ENCODE measurements at regions of chr11 and their contacts with region 1.

Region 1: DNA sequence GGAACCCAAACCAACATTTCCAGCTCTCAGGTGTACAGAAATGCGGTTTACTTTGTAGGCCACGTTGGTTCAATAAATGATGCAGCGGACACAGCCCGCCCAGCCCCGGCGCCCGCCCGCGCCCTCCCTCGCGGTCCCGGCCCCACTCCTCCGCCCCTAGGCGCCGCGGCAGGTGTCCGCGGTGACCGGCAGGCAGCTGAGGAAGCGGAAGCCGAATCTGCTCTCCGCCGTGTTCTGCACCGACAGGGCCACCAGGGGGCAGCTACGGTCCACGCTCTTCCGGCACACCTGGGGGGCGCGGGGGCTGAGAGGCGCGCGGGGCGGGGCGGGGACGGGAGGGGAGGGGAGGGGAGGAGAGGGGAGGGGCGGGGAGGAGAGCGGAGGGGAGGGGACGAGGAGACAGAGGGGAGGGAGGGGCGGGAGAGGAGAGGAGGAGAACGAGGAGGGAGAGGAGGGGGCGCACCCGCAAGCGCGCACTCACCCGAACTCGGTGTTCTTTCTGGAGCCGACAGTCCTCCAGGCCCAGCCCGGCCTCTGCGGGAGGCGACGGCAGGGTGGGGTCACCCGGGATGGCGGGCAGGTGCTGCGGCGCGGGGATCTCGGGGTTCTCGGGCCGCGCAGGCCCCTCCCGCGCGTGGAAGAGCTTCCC is 5.6 kb downstream of the LMNTD2 start:
- DNase-seq: peak; percentile 23 to 92 (median 66)
- ATAC-seq: peak; percentile 73 to 82 (median 78)
- H3K4me3 ChIP-seq: peak overlapping the region; percentile 40 to 52
- H3K4me3 Mint-ChIP-seq: peak overlapping the region; percentile 34 to 62 (median 55)
- H3K27ac ChIP-seq: no peak overlapping the region
- H3K27ac Mint-ChIP-seq: no peak overlapping the region
- H3K4me1 ChIP-seq: peaks cover 2 to 31% of the 10 kb centered on the region in 2 experiments
- H3K4me1 Mint-ChIP-seq: peaks cover 10 to 13% (median 11%) of the 10 kb centered on the region in 3 donors
- H3K27me3 ChIP-seq: peaks cover 0 to 22% of the 10 kb centered on the region in 2 experiments
- H3K27me3 Mint-ChIP-seq: no peaks in the 10 kb centered on the region

Region 2: GRCh38 chr11:225734-226453 is 329.1 kb before region 1 on chr11:
- CTCF ChIA-PET with region 1: no interaction called
- POLR2A ChIA-PET with region 1: no interaction called
- DNase-seq: no peak
- ATAC-seq: no peak
- H3K4me3 ChIP-seq: no peak overlapping the region
- H3K4me3 Mint-ChIP-seq: no peak overlapping the region
- H3K27ac ChIP-seq: no peak overlapping the region
- H3K27ac Mint-ChIP-seq: no peak overlapping the region
- H3K4me1 ChIP-seq: no peaks in the 10 kb centered on the region
- H3K4me1 Mint-ChIP-seq: peaks cover 8 to 10% (median 9%) of the 10 kb centered on the region in 3 donors
- H3K27me3 ChIP-seq: no peaks in the 10 kb centered on the region
- H3K27me3 Mint-ChIP-seq: no peaks in the 10 kb centered on the region

Region 3: GRCh38 chr11:257766-258493 is 297.0 kb before region 1 on chr11:
- CTCF ChIA-PET with region 1: no interaction called
- POLR2A ChIA-PET with region 1: no interaction called
- DNase-seq: no peak
- ATAC-seq: no peak
- H3K4me3 ChIP-seq: no peak overlapping the region
- H3K4me3 Mint-ChIP-seq: no peak overlapping the region
- H3K27ac ChIP-seq: no peak overlapping the region
- H3K27ac Mint-ChIP-seq: no peak overlapping the region
- H3K4me1 ChIP-seq: no peaks in the 10 kb centered on the region
- H3K4me1 Mint-ChIP-seq: peaks cover 0 to 11% (median 2%) of the 10 kb centered on the region in 3 donors
- H3K27me3 ChIP-seq: peaks cover 0 to 7% of the 10 kb centered on the region in 2 experiments
- H3K27me3 Mint-ChIP-seq: peaks cover 0 to 4% of the 10 kb centered on the region in 2 donors

Region 4: DNA sequence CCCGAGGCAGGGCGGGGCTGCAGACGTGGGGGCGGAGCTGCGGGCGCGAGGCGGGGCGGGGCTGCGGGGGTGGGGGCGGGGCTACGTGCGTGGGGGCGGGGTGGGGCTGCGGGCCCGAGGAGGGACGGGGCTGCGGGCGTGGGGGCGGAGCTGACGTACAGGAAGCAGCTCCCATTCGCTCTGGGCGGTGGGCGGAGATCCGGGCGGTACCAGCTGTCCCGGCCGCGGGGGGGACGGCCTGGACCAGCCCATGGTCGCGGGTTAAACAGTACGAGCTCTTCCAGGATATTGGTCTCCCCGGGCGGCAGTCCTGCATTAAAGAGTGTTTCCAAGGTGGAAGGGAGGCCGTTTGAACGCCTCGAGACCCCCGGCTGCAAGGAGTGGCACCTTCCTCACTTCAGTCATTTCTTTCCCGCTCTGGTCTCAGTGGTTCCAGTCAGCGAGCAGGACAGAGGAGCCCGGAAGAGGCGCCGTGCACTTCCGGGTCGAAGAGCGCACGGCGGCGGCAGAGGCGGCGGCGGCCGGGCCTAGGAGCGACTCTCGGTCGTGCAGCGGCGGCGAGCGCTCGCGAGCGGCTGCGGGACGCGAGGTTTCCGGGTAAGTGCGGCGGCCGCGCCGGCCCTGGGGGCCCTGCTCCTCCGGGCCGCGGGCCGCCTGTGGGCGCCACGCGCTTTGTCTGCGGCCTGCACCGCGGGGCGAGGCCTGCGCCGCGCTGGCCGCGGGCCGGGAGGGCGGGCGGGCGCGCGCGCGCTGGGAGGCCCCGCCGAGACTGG is 21.2 kb after region 1 on chr11 and contains the start of gene PHRF1:
- CTCF ChIA-PET with region 1: interaction called in 1 of 2 experiments, 12 read pairs
- POLR2A ChIA-PET with region 1: no interaction called
- DNase-seq: peak; percentile 89 to 97 (median 94)
- ATAC-seq: peak; percentile 84 to 91 (median 87)
- H3K4me3 ChIP-seq: peak within 1 kb of the TSS; percentile 84 to 93
- H3K4me3 Mint-ChIP-seq: peak within 1 kb of the TSS; percentile 89 to 98 (median 89)
- H3K27ac ChIP-seq: peak within 1 kb of the TSS; percentile 91
- H3K27ac Mint-ChIP-seq: peak within 1 kb of the TSS; percentile 96 to 99
- H3K4me1 ChIP-seq: peaks cover 29 to 61% of the 10 kb centered on the region in 2 experiments
- H3K4me1 Mint-ChIP-seq: peaks cover 50 to 57% (median 54%) of the 10 kb centered on the region in 3 donors
- H3K27me3 ChIP-seq: peaks cover 0 to 17% of the 10 kb centered on the region in 2 experiments
- H3K27me3 Mint-ChIP-seq: peaks cover 0 to 5% of the 10 kb centered on the region in 2 donors
- total RNA-seq, gene PHRF1: 40.2 to 69.4 (median 66.3) TPM

Measured in T-cell (primary cell).